CD14-positive monocyte (primary cell): ENCODE measurements at regions of chr4 and their contacts with region 1.

Region 1: DNA sequence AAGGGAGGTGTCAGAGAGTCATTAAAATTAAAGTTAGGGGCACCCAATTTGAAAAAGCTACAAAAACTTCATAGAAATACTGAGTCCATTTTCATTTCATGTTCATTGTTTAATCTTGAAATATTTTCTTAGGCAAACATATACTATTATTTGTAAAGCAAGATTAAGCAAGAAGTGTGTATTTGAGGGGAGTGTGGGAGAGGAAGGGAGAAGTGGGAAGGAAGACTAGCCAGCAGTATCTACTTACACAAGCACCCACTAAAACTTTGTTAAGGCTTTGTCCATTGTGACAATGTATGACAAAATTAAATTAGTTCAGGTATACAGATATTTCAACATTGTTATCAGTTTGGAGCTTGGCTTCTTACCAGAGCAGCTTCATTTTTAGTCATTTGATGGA is 222.9 kb downstream of the ARHGAP24 start:
- DNase-seq: peak in 1 of 3 donors; percentile 28
- H3K4me3 ChIP-seq: peak overlapping the region in 1 of 3 experiments; percentile 33
- H3K4me3 Mint-ChIP-seq: peak overlapping the region; percentile 16 to 78
- H3K27ac ChIP-seq: peak overlapping the region; percentile 20 to 76
- H3K27ac Mint-ChIP-seq: peak overlapping the region; percentile 57 to 89 (median 83)
- H3K4me1 ChIP-seq: peaks cover 40 to 54% of the 10 kb centered on the region in 2 donors
- H3K4me1 Mint-ChIP-seq: peaks cover 50% of the 10 kb centered on the region
- H3K27me3 ChIP-seq: no peaks in the 10 kb centered on the region
- H3K27me3 Mint-ChIP-seq: no peaks in the 10 kb centered on the region
- CTCF ChIP-seq: no peak

Region 2: DNA sequence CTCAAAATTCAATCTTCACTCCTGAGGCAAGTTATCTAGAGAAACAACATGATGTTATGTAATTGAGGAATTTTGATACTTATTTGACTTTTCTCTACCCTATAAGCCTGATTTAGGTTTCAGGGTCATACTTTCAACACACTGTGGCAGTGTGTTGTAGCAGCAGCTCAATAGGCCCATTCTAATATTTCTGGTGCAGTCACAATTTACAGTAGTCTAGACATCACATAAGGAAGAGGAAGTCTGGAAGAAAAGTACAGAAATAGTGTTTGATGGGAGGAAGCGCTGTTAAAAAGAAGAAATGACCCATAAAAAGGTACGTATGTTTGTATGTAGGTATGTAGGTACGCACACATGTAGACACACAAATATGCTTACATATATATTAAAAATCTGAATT is 28.6 kb before region 1 on chr4:
- intact Hi-C with region 1: no loop called
- DNase-seq: peak; percentile 29 to 87 (median 32)
- H3K4me3 ChIP-seq: no peak overlapping the region
- H3K4me3 Mint-ChIP-seq: no peak overlapping the region
- H3K27ac ChIP-seq: peak overlapping the region in 1 of 2 donors; percentile 56
- H3K27ac Mint-ChIP-seq: peak overlapping the region in 3 of 7 donors; percentile 3 to 51 (median 28)
- H3K4me1 ChIP-seq: peaks cover 27 to 38% of the 10 kb centered on the region in 2 donors
- H3K4me1 Mint-ChIP-seq: peaks cover 61% of the 10 kb centered on the region
- H3K27me3 ChIP-seq: no peaks in the 10 kb centered on the region
- H3K27me3 Mint-ChIP-seq: peaks cover 0 to 2% (median 0%) of the 10 kb centered on the region in 3 donors
- CTCF ChIP-seq: no peak

Region 3: GRCh38 chr4:85741921-85742591 is 44.2 kb after region 1 on chr4:
- intact Hi-C with region 1: loop called in 1 of 2 experiments (anchors 5 kb)
- DNase-seq: no peak
- H3K4me3 ChIP-seq: no peak overlapping the region
- H3K4me3 Mint-ChIP-seq: no peak overlapping the region
- H3K27ac ChIP-seq: peak overlapping the region; percentile 23 to 40
- H3K27ac Mint-ChIP-seq: peak overlapping the region in 5 of 7 donors; percentile 58 to 96 (median 76)
- H3K4me1 ChIP-seq: peaks cover 36 to 60% of the 10 kb centered on the region in 2 donors
- H3K4me1 Mint-ChIP-seq: peaks cover 56% of the 10 kb centered on the region
- H3K27me3 ChIP-seq: no peaks in the 10 kb centered on the region
- H3K27me3 Mint-ChIP-seq: peaks cover 0 to 3% (median 1%) of the 10 kb centered on the region in 3 donors
- CTCF ChIP-seq: no peak